ENCODE measurements at regions of chr13 and their contacts with region 1.

Region 1: GRCh38 chr13:60448907-60449510 is 52.0 kb downstream of the TDRD3 start:
- DNase-seq: no peak
- H3K4me3 ChIP-seq: no peak overlapping the region
- H3K27ac ChIP-seq: no peak overlapping the region
- H3K4me1 ChIP-seq: peaks cover 0 to 3% (median 0%) of the 10 kb centered on the region in 4 experiments; a peak in 1 of 7 replicates
- H3K27me3 ChIP-seq: no peaks in the 10 kb centered on the region
- CTCF ChIP-seq: peak in 2 of 3 experiments; percentile 55 to 62; a peak in 2 of 4 replicates
- EP300 ChIP-seq: no peak
- POLR2A ChIP-seq: no peak
- RAD21 ChIP-seq: peak; percentile 74 to 75

Region 2: GRCh38 chr13:60143775-60144174 is 305.2 kb before region 1 on chr13:
- CTCF ChIA-PET with region 1: no interaction called
- POLR2A ChIA-PET with region 1: no interaction called
- DNase-seq: no peak
- H3K4me3 ChIP-seq: no peak overlapping the region; a peak in 1 of 8 replicates
- H3K27ac ChIP-seq: no peak overlapping the region
- H3K4me1 ChIP-seq: peaks cover 0 to 16% (median 3%) of the 10 kb centered on the region in 4 experiments; a peak in 3 of 7 replicates
- H3K27me3 ChIP-seq: no peaks in the 10 kb centered on the region
- CTCF ChIP-seq: no peak
- EP300 ChIP-seq: no peak
- POLR2A ChIP-seq: no peak
- RAD21 ChIP-seq: no peak

Region 3: GRCh38 chr13:60463787-60464186 is 14.8 kb after region 1 on chr13:
- CTCF ChIA-PET with region 1: interaction called, 32 read pairs
- POLR2A ChIA-PET with region 1: no interaction called
- DNase-seq: no peak
- H3K4me3 ChIP-seq: no peak overlapping the region
- H3K27ac ChIP-seq: no peak overlapping the region
- H3K4me1 ChIP-seq: no peaks in the 10 kb centered on the region
- H3K27me3 ChIP-seq: no peaks in the 10 kb centered on the region
- CTCF ChIP-seq: no peak
- EP300 ChIP-seq: no peak
- POLR2A ChIP-seq: no peak
- RAD21 ChIP-seq: no peak

Region 4: DNA sequence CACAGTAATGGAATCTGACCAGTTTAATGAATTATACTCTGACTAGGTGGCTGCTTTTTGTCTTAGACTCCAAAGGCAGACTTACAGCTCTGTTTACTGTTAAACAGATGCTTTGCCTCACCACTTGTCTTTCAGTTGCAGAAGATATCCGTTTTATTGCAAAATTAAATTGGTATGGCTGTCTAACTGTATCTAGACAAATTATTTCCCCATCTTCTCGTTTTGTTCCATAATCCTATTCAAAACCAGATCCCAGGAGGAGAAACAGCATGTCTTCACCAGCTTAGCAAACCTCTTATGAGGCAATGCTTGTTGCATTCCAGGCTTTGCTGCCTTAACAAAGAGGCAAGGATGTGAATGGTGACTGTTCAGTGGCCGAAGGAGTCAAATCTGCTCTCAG is 163.6 kb after region 1 on chr13:
- CTCF ChIA-PET with region 1: interaction called, 29 read pairs
- POLR2A ChIA-PET with region 1: no interaction called
- DNase-seq: no peak
- H3K4me3 ChIP-seq: no peak overlapping the region
- H3K27ac ChIP-seq: no peak overlapping the region
- H3K4me1 ChIP-seq: peaks cover 0 to under 1% (median 0%) of the 10 kb centered on the region in 4 experiments; a peak in 2 of 7 replicates
- H3K27me3 ChIP-seq: no peaks in the 10 kb centered on the region
- CTCF ChIP-seq: no peak
- EP300 ChIP-seq: no peak
- POLR2A ChIP-seq: no peak
- RAD21 ChIP-seq: no peak

Region 5: GRCh38 chr13:60617991-60618733 is 169.2 kb after region 1 on chr13:
- CTCF ChIA-PET with region 1: interaction called, 29 read pairs
- POLR2A ChIA-PET with region 1: no interaction called
- DNase-seq: peak; percentile 31 to 54
- H3K4me3 ChIP-seq: no peak overlapping the region
- H3K27ac ChIP-seq: no peak overlapping the region
- H3K4me1 ChIP-seq: peaks cover 0 to 4% (median 0%) of the 10 kb centered on the region in 4 experiments; a peak in 2 of 7 replicates
- H3K27me3 ChIP-seq: no peaks in the 10 kb centered on the region
- CTCF ChIP-seq: peak; percentile 20 to 95 (median 73)
- EP300 ChIP-seq: no peak
- POLR2A ChIP-seq: no peak
- RAD21 ChIP-seq: peak; percentile 95 to 97